ENCODE measurements at regions of chr15 and their contacts with region 1.

Region 1: GRCh38 chr15:31887246-31887645 is 143.1 kb upstream of the CHRNA7 start:
- DNase-seq: no peak
- H3K4me3 ChIP-seq: no peak overlapping the region
- H3K27ac ChIP-seq: no peak overlapping the region
- H3K4me1 ChIP-seq: no peaks in the 10 kb centered on the region
- H3K27me3 ChIP-seq: 0 out of 7 replicates have a peak, but pooled peaks cover 0 to 2% (median under 1%) of the 10 kb centered on the region in 4 experiments
- CTCF ChIP-seq: peak; percentile 54 to 62 (median 59); a peak in 3 of 4 replicates
- EP300 ChIP-seq: no peak
- POLR2A ChIP-seq: no peak
- RAD21 ChIP-seq: peak; percentile 56 to 63

Region 2: GRCh38 chr15:31870328-31871165 is 16.7 kb before region 1 on chr15:
- CTCF ChIA-PET with region 1: interaction called, 15 read pairs
- POLR2A ChIA-PET with region 1: no interaction called
- DNase-seq: peak; percentile 62 to 91
- H3K4me3 ChIP-seq: peak within 1 kb of the TSS; percentile 41 to 73 (median 50)
- H3K27ac ChIP-seq: 0 out of 2 replicates have a peak within 1 kb of the TSS, but pooled peaks have one; percentile 20
- H3K4me1 ChIP-seq: peaks cover 1 to 7% (median 3%) of the 10 kb centered on the region in 4 experiments; a peak in 4 of 7 replicates
- H3K27me3 ChIP-seq: peaks cover 0 to 14% (median 11%) of the 10 kb centered on the region in 4 experiments; a peak in 5 of 7 replicates
- CTCF ChIP-seq: no peak
- EP300 ChIP-seq: no peak
- POLR2A ChIP-seq: peak in 1 of 2 experiments; percentile 45; a peak in 1 of 3 replicates
- RAD21 ChIP-seq: no peak

Region 3: DNA sequence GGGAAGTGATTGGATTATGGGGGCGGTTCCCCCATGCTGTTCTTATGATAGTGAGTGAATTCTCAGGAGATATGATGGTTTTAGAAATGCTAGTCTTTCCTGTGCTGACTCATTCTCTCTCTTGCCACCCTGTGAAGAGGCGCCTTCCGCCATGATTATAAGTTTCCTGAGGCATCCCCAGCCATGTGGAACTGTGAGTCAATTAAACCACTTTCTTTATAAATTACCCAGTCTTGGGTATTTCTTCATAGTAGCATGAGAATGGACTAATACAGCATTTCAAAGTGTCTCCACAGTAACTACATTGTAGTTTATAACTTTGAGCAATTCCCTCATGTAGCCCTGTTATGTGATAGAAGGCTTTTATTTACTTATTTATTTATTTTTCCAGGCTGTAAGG is 14.3 kb after region 1 on chr15:
- CTCF ChIA-PET with region 1: interaction called, 12 read pairs
- POLR2A ChIA-PET with region 1: no interaction called
- DNase-seq: no peak
- H3K4me3 ChIP-seq: no peak overlapping the region
- H3K27ac ChIP-seq: no peak overlapping the region
- H3K4me1 ChIP-seq: peaks cover 3 to 12% (median 5%) of the 10 kb centered on the region in 4 experiments
- H3K27me3 ChIP-seq: no peaks in the 10 kb centered on the region
- CTCF ChIP-seq: no peak
- EP300 ChIP-seq: no peak
- POLR2A ChIP-seq: no peak
- RAD21 ChIP-seq: no peak